ENCODE measurements at regions of chr9 and their contacts with region 1.

Region 1: GRCh38 chr9:35903049-35903448 is 3.0 kb upstream of the HRCT1 start:
- DNase-seq: no peak
- ATAC-seq: no peak; the same call in 1 of the 2 replicates
- H3K4me3 Mint-ChIP-seq: no peak overlapping the region
- H3K27ac Mint-ChIP-seq: no peak overlapping the region
- H3K4me1 Mint-ChIP-seq: peaks cover 20% of the 10 kb centered on the region
- H3K27me3 Mint-ChIP-seq: peaks cover 5% of the 10 kb centered on the region; the same call in 1 of the 2 replicates
- CTCF ChIP-seq: peak; percentile 68

Region 2: DNA sequence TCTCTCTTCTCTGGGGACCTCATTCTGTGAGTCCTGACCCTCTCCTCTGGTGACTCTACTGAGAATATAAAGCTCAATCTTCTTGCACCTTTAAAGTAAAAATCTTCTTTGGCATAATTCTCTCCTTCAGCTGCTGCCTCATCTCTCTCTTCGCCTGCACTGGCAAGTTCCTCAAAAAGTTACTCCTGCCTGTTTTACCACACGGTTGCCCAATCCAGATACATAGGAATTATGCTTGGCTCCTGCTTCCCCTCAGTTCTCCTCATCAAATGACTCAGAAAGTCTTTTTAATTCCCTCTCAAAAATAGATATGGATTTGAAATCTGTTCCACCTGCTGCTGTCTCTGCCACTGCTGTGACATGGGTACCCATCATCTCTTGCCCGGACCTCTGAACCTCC is 11.4 kb before region 1 on chr9:
- CTCF ChIA-PET with region 1: interaction called, 11 read pairs
- POLR2A ChIA-PET with region 1: no interaction called
- DNase-seq: no peak
- ATAC-seq: no peak
- H3K4me3 Mint-ChIP-seq: no peak overlapping the region
- H3K27ac Mint-ChIP-seq: no peak overlapping the region
- H3K4me1 Mint-ChIP-seq: no peaks in the 10 kb centered on the region
- H3K27me3 Mint-ChIP-seq: no peaks in the 10 kb centered on the region; the same call in 1 of the 2 replicates
- CTCF ChIP-seq: no peak

Region 3: DNA sequence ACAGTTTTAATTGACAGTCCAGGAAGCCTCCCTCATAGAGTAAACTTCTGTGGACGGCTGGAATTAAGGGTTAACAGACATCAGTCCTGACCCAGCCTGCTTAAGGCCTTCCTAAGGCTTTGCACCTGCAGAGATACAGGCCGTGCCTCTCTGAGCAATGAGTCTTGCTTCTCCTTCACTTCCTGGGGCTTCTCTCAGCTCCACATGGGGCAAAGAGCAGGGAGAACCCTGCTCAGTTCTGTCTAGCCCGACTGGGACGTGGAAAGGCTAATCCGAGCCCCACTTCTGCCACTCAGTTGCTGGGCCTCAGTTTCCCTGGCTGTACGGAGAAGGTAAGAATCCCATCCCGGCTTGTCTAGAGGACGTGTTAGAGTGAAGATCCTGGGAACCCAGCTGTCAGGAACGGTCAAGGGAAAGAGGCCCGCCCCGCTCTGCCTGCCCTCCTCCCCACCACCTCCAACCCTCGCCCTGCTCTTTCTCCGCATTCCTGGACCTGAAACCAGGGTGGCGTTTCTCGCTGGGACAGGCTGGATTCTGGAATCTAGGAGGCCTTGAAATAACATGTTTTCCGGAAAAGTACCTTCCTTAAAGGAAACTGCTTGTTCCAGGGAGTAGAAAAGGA is 12.7 kb after region 1 on chr9:
- CTCF ChIA-PET with region 1: interaction called, 11 read pairs
- POLR2A ChIA-PET with region 1: no interaction called
- DNase-seq: no peak
- ATAC-seq: peak; percentile 24; the same call in 1 of the 2 replicates
- H3K4me3 Mint-ChIP-seq: no peak overlapping the region
- H3K27ac Mint-ChIP-seq: no peak overlapping the region
- H3K4me1 Mint-ChIP-seq: peaks cover 12% of the 10 kb centered on the region
- H3K27me3 Mint-ChIP-seq: no peaks in the 10 kb centered on the region
- CTCF ChIP-seq: no peak

Region 4: DNA sequence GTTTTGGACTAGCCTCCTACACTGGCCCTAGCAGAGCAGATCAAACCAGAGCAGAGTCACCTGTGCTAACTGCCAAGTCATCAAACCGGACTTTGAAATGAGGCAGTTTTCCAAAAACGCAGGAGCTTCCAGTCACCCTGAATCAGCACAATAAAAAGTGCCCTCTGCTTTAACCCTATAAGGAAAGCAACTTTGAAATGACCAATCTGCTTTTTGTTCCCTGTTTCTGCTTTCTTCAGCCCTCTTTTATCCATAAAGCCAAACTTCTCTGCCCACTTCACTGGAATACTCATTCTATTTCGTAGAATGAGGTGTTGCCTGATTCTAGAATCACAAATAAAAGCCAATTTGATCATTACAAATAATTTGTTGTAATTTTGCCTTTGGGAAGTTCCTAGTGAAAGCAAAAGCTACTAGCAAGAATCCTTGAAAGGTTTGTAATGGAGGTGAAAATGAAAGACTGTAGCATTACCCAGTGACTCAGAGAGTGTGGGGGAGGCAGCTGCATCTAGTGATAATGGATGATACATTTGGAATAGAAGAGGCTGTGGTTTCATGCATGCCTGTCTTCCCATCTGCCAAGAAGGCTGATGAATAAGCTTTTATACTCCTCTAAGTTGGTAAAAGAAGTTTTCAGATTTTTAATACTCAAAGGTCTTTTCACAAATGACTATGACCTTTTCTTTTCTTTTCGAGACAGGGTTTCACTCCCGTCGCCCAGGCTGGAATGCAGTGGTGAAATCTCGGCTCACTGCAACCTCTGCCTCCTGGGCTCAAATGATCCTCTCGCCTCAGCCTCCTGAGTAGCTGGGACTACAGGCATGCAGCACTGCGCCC is 21.1 kb after region 1 on chr9:
- CTCF ChIA-PET with region 1: interaction called, 11 read pairs
- POLR2A ChIA-PET with region 1: no interaction called
- DNase-seq: no peak
- ATAC-seq: no peak
- H3K4me3 Mint-ChIP-seq: no peak overlapping the region
- H3K27ac Mint-ChIP-seq: no peak overlapping the region
- H3K4me1 Mint-ChIP-seq: no peaks in the 10 kb centered on the region
- H3K27me3 Mint-ChIP-seq: peaks cover 4% of the 10 kb centered on the region; the same call in 1 of the 2 replicates
- CTCF ChIP-seq: no peak

Region 5: GRCh38 chr9:35945341-35946018 is 42.4 kb after region 1 on chr9:
- CTCF ChIA-PET with region 1: interaction called, 34 read pairs
- POLR2A ChIA-PET with region 1: no interaction called
- DNase-seq: peak; percentile 85
- ATAC-seq: peak; percentile 84
- H3K4me3 Mint-ChIP-seq: peak overlapping the region; percentile 57
- H3K27ac Mint-ChIP-seq: no peak overlapping the region; the same call in 1 of the 2 replicates
- H3K4me1 Mint-ChIP-seq: peaks cover 8% of the 10 kb centered on the region; the same call in 1 of the 2 replicates
- H3K27me3 Mint-ChIP-seq: peaks cover 71% of the 10 kb centered on the region
- CTCF ChIP-seq: peak; percentile 56

Region 6: GRCh38 chr9:35954942-35955546 is 52.0 kb after region 1 on chr9:
- CTCF ChIA-PET with region 1: interaction called, 13 read pairs
- POLR2A ChIA-PET with region 1: no interaction called
- DNase-seq: peak; percentile 43
- ATAC-seq: peak; percentile 84
- H3K4me3 Mint-ChIP-seq: no peak overlapping the region
- H3K27ac Mint-ChIP-seq: no peak overlapping the region
- H3K4me1 Mint-ChIP-seq: peaks cover 5% of the 10 kb centered on the region; the same call in 1 of the 2 replicates
- H3K27me3 Mint-ChIP-seq: peaks cover 24% of the 10 kb centered on the region
- CTCF ChIP-seq: peak; percentile 78

Region 7: GRCh38 chr9:36036780-36037548 is 133.9 kb after region 1 on chr9 and contains the start of gene RECK:
- CTCF ChIA-PET with region 1: no interaction called
- POLR2A ChIA-PET with region 1: no interaction called
- DNase-seq: peak; percentile 96
- ATAC-seq: peak; percentile 91
- H3K4me3 Mint-ChIP-seq: peak within 1 kb of the TSS; percentile 93
- H3K27ac Mint-ChIP-seq: peak within 1 kb of the TSS; percentile 91
- H3K4me1 Mint-ChIP-seq: peaks cover 28% of the 10 kb centered on the region
- H3K27me3 Mint-ChIP-seq: no peaks in the 10 kb centered on the region; the same call in 1 of the 2 replicates
- CTCF ChIP-seq: no peak
- total RNA-seq, gene RECK: 9.9 to 11.2 TPM (median 10.3 TPM) in 3 replicates